Transverse colon (tissue), 4 donors: ENCODE measurements at regions of chr13 and their contacts with region 1.

Region 1: GRCh38 chr13:46382224-46382623 is 4.8 kb downstream of the RUBCNL start:
- DNase-seq: no peak
- H3K4me3 ChIP-seq: no peak overlapping the region
- H3K27ac ChIP-seq: peak overlapping the region in 3 of 4 donors; percentile 6 to 35 (median 11)
- H3K4me1 ChIP-seq: peaks cover 0 to 43% (median 13%) of the 10 kb centered on the region in 4 donors
- H3K27me3 ChIP-seq: peaks cover 28% of the 10 kb centered on the region
- CTCF ChIP-seq: no peak
- EP300 ChIP-seq: no peak
- POLR2A ChIP-seq: no peak

Region 2: DNA sequence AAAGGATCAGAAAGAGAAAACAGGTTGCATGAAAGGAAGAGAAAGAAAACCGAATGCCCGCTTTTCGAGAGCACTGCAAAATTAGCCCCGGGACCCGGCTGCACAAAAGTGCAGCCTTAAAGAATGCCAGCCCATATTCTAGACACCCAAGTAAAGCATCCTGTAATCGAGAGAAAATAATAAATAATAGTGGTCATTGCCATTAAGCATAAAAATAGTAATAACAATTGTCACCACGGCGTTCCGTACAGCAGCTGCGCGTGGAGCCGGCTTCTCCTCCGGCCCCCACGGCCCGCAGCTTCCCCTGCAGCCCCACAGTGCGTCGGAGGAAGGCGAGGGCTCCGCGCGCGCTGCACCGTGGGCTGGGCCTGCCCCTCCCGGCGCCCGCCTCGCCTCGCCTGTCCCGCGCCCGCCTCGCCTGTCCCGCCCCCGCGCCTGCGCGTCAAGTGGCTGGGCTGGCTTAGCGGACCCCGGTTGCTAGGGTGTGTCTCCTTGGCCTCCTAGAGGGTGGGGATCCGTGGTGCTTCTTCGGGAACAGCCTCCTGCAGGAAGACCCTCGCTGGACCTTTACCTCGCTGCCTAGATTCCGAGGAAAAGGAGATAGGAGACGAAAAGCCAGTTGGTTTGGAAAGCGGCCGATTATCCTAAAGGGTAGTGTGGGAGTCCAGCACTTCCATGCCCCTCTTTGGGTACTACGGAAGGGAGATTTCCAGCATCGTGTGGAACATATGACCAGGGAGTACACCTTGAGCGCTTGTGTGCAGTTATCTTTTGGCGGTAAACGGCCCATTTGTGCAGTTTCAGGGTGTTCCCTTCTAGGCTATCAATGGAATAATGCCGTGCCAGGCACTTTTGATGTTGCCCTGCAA is 170.5 kb before region 1 on chr13 and contains the start of gene LRRC63:
- in situ Hi-C with region 1: no loop called
- intact Hi-C with region 1: no loop called
- DNase-seq: peak; percentile 87
- H3K4me3 ChIP-seq: peak within 1 kb of the TSS; percentile 35 to 50 (median 38)
- H3K27ac ChIP-seq: peak within 1 kb of the TSS; percentile 32 to 53 (median 38)
- H3K4me1 ChIP-seq: peaks cover 0 to 14% (median 9%) of the 10 kb centered on the region in 4 donors
- H3K27me3 ChIP-seq: peaks cover 31% of the 10 kb centered on the region
- CTCF ChIP-seq: no peak
- EP300 ChIP-seq: no peak
- POLR2A ChIP-seq: no peak
- total RNA-seq, gene LRRC63: 0.32 TPM in 1 of 4 donors, not detected in the others

Region 3: GRCh38 chr13:47621931-47622330 is 1239.7 kb after region 1 on chr13:
- in situ Hi-C with region 1: no loop called
- intact Hi-C with region 1: loop called (anchors 5 kb)
- DNase-seq: no peak
- H3K4me3 ChIP-seq: no peak overlapping the region
- H3K27ac ChIP-seq: no peak overlapping the region
- H3K4me1 ChIP-seq: no peaks in the 10 kb centered on the region
- H3K27me3 ChIP-seq: no peaks in the 10 kb centered on the region
- CTCF ChIP-seq: no peak
- EP300 ChIP-seq: no peak
- POLR2A ChIP-seq: no peak